ENCODE measurements at regions of chr18 and their contacts with region 1.

Region 1: GRCh38 chr18:11398625-11399024 is 210.8 kb upstream of the SLC35G4 start:
- DNase-seq: no peak
- ATAC-seq: no peak
- H3K4me3 Mint-ChIP-seq: no peak overlapping the region
- H3K27ac Mint-ChIP-seq: no peak overlapping the region
- H3K4me1 Mint-ChIP-seq: peaks cover 4% of the 10 kb centered on the region
- H3K27me3 Mint-ChIP-seq: no peaks in the 10 kb centered on the region
- CTCF ChIP-seq: no peak

Region 2: GRCh38 chr18:11411048-11411447 is 12.4 kb after region 1 on chr18:
- CTCF ChIA-PET with region 1: interaction called, 10 read pairs
- POLR2A ChIA-PET with region 1: no interaction called
- DNase-seq: no peak
- ATAC-seq: no peak
- H3K4me3 Mint-ChIP-seq: no peak overlapping the region
- H3K27ac Mint-ChIP-seq: no peak overlapping the region
- H3K4me1 Mint-ChIP-seq: peaks cover 11% of the 10 kb centered on the region
- H3K27me3 Mint-ChIP-seq: no peaks in the 10 kb centered on the region; the same call in 1 of the 2 replicates
- CTCF ChIP-seq: no peak